Activated CD8-positive, alpha-beta T cell treated with anti-CD3 and anti-CD28 coated beads, Interleukin-2, amount 10 ng/mL, durations not matched to agents 7 days and 5 days (primary cell): ENCODE measurements at regions of chr14 and their contacts with region 1.

Region 1: GRCh38 chr14:22900081-22900799 is 17.2 kb downstream of the REM2 start:
- DNase-seq: peak; percentile 68
- ATAC-seq: peak; percentile 75
- H3K4me3 Mint-ChIP-seq: no peak overlapping the region
- H3K27ac Mint-ChIP-seq: peak overlapping the region; percentile 4
- H3K4me1 Mint-ChIP-seq: peaks cover 13% of the 10 kb centered on the region
- H3K27me3 Mint-ChIP-seq: no peaks in the 10 kb centered on the region

Region 2: DNA sequence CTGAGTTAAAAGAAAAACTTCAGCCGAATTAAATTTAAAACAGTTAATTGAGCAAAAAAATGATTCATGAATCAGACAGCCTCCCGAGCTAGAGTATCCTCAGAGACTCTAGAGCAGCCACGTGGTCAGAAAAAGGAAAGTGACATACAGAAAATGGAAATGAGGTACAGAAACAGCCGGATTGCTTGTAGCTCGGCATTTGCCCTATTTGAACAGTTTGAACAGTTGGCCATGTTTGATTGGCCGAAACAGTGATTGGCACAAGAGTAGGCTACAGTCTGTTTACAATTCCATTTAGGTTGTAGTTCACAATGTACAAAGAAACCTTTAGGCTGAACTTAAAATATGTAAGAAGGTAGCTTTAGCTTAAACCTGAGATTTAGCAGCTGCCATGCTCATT is 146.7 kb before region 1 on chr14:
- CTCF ChIA-PET with region 1: no interaction called
- POLR2A ChIA-PET with region 1: no interaction called
- DNase-seq: no peak
- ATAC-seq: no peak
- H3K4me3 Mint-ChIP-seq: no peak overlapping the region
- H3K27ac Mint-ChIP-seq: no peak overlapping the region
- H3K4me1 Mint-ChIP-seq: peaks cover 4% of the 10 kb centered on the region
- H3K27me3 Mint-ChIP-seq: peaks cover 6% of the 10 kb centered on the region

Region 3: GRCh38 chr14:22822571-22823098 is 77.6 kb before region 1 on chr14:
- CTCF ChIA-PET with region 1: interaction called, 46 read pairs
- POLR2A ChIA-PET with region 1: no interaction called
- DNase-seq: peak; percentile 79
- ATAC-seq: peak; percentile 89
- H3K4me3 Mint-ChIP-seq: peak overlapping the region; percentile 39
- H3K27ac Mint-ChIP-seq: no peak overlapping the region
- H3K4me1 Mint-ChIP-seq: peaks cover 32% of the 10 kb centered on the region
- H3K27me3 Mint-ChIP-seq: peaks cover 24% of the 10 kb centered on the region

Region 4: GRCh38 chr14:22829661-22830442 is 70.4 kb before region 1 on chr14 and contains the start of gene MRPL52:
- CTCF ChIA-PET with region 1: interaction called, 46 read pairs
- POLR2A ChIA-PET with region 1: no interaction called
- DNase-seq: peak; percentile 95
- ATAC-seq: peak; percentile 93
- H3K4me3 Mint-ChIP-seq: peak within 1 kb of the TSS; percentile 95
- H3K27ac Mint-ChIP-seq: peak within 1 kb of the TSS; percentile 96
- H3K4me1 Mint-ChIP-seq: peaks cover 32% of the 10 kb centered on the region
- H3K27me3 Mint-ChIP-seq: no peaks in the 10 kb centered on the region
- total RNA-seq, gene MRPL52: 93.9 to 97.3 TPM

Region 5: GRCh38 chr14:22886500-22887259 is 13.6 kb before region 1 on chr14:
- CTCF ChIA-PET with region 1: interaction called, 43 read pairs
- POLR2A ChIA-PET with region 1: interaction called, 3 read pairs
- DNase-seq: peak; percentile 78
- ATAC-seq: peak; percentile 88
- H3K4me3 Mint-ChIP-seq: peak overlapping the region; percentile 75
- H3K27ac Mint-ChIP-seq: peak overlapping the region; percentile 75
- H3K4me1 Mint-ChIP-seq: peaks cover 31% of the 10 kb centered on the region
- H3K27me3 Mint-ChIP-seq: peaks cover 36% of the 10 kb centered on the region

Region 6: DNA sequence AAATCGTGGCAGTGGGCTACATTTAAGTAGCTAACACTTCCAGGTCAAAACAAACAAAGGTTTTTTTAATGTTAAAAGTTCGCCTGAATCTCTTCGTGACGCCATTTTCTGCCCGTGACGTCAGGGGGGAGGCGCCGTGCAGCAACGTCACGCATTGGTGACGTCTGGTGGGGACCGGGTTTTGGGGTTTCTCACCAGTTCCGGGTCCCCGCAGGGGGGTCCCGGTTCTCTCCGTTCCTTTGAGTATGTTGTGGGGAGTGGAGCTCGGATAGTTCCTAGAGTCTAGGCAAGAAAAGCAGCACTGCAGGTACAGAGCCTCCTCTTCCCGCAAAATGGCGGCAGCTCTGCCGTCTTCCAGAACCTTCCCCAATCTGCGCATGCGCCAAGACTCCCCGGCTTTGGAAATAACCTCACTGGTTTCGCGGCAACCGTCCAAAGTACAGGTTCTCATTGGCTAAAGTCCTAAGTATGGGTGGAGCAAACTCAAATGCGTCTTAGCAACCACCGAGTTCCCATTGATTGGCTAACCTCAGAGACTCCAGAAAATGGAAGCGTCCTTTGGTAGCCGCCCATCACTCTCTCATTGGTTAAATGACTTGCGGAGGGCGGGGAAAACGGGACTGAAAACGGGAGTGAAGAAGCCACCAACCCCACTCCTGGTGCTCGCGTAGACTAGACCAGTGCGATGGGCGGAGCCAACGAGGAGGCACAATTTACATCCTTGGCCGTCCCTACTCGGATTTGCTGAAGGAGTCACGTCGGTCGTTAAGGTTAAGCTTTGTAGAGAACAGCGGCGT is 18.8 kb after region 1 on chr14 and contains the start of gene RBM23:
- CTCF ChIA-PET with region 1: interaction called, 22 read pairs
- POLR2A ChIA-PET with region 1: interaction called, 7 read pairs
- DNase-seq: peak; percentile 100
- ATAC-seq: peak; percentile 96
- H3K4me3 Mint-ChIP-seq: peak within 1 kb of the TSS; percentile 88
- H3K27ac Mint-ChIP-seq: peak within 1 kb of the TSS; percentile 98
- H3K4me1 Mint-ChIP-seq: peaks cover 35% of the 10 kb centered on the region
- H3K27me3 Mint-ChIP-seq: no peaks in the 10 kb centered on the region
- total RNA-seq, gene RBM23: 77.1 to 81.2 TPM

Region 7: GRCh38 chr14:23183479-23183878 is 283.2 kb after region 1 on chr14 and contains the start of gene SLC7A8:
- CTCF ChIA-PET with region 1: no interaction called
- POLR2A ChIA-PET with region 1: no interaction called
- DNase-seq: peak; percentile 42
- ATAC-seq: peak; percentile 68
- H3K4me3 Mint-ChIP-seq: no peak within 1 kb of the TSS
- H3K27ac Mint-ChIP-seq: no peak within 1 kb of the TSS
- H3K4me1 Mint-ChIP-seq: no peaks in the 10 kb centered on the region
- H3K27me3 Mint-ChIP-seq: peaks cover 27% of the 10 kb centered on the region
- total RNA-seq, gene SLC7A8: 0.24 to 0.57 TPM